ENCODE measurements at regions of chr20 and their contacts with region 1.

Region 1: DNA sequence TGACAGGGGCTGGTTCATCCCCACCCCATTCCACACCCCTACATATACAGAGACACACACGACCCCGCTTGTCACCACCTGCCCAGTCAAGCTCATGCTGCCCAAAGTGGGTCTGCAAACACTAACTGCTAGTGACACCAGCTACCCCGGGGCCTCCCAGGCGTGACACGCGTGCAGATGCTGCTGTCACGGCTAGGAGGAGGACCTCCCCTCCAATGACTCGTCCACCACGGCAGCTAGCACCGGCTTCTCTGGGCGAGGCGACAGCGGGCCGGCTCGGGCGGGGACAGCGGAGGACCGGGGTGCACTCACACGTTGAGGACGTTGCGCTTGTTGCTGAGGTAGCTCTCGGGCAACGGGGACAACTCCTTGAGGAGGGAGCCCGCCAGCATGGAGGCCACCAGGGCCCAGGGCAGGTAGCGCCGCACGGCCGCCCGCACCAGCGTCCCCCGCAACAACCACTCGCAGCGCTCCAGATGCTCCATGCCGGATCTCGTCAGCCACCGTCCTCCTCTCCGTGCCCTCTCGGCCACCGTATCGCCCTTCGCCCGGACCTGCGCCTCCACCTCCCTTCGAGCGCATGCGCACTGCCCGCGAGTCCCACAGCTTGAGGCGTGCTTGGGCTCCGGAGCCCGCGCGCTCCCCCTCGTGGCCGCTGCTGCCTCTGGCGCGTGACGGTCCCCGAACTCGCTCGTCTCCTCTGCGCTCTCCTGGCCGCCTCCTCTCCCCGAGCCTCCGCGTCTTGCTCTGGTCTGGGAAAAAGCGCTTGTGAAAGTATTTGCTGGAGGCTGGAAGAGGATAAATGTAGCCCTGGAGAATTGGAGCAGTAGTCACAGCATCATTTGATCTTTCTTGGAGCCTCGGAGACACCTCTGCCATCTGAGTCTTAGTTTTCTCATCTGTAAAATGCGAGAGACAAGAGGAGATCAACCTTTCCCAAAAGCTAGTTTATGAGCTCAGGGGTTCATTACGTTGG is at the start of gene FITM2:
- DNase-seq: peak; percentile 97 to 100 (median 98)
- ATAC-seq: peak; percentile 98
- H3K4me3 ChIP-seq: peak within 1 kb of the TSS; percentile 83 to 90
- H3K27ac ChIP-seq: peak within 1 kb of the TSS; percentile 26 to 70
- H3K4me1 ChIP-seq: peaks cover 7 to 20% of the 10 kb centered on the region in 2 donors
- H3K27me3 ChIP-seq: peaks cover 0 to 6% of the 10 kb centered on the region in 2 donors
- CTCF ChIP-seq: peak; percentile 86 to 93
- polyA plus RNA-seq, gene FITM2: 6.8 to 9.9 (median 8.0) TPM

Region 2: DNA sequence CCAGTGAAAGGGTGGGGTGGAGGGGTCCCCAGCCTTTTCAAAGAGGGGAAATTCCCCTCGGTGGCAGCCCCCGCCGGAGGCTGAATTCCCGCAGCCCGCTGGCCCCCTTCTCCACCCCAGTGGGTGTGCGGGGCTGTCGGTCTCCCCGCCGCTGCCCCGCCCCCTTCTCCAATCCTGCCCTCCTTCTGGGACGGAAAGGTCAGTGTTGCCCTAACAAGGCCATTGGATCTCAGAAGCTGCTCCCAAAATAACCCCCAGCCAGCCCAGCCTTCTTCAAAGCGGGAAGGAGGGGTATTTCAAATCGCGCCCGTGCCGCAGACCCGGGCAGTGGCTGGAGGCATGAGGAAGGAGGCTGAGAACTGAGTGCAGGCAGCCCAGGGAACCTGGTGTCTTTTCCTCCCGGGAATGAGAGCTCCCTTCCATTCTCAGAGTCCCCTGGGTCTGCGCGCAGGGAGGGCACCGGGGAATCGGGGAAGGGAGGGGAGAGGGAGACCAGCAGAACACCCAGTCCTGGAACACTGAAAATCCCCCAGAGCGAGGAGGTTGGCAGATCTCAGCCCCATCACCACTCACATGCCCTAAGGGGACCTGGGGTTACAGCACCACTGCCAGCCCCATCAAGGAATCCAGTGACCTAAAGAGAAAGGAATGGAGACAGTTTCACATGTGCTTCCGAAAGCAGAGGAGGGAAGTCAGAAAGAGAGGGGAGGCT is 123.7 kb before region 1 on chr20 and contains the start of gene JPH2:
- intact Hi-C with region 1: no loop called
- DNase-seq: no peak
- ATAC-seq: peak; percentile 50
- H3K4me3 ChIP-seq: peak within 1 kb of the TSS; percentile 15 to 21
- H3K27ac ChIP-seq: no peak within 1 kb of the TSS
- H3K4me1 ChIP-seq: peaks cover 9 to 15% of the 10 kb centered on the region in 2 donors
- H3K27me3 ChIP-seq: peaks cover 7 to 59% of the 10 kb centered on the region in 2 donors
- CTCF ChIP-seq: no peak
- polyA plus RNA-seq, gene JPH2: 0.83 to 1.9 (median 1.1) TPM

Region 3: GRCh38 chr20:44217342-44218092 is 93.4 kb before region 1 on chr20:
- intact Hi-C with region 1: loop called in 1 of 2 experiments (anchors 5 kb)
- DNase-seq: peak in 3 of 4 donors; percentile 70 to 80 (median 73)
- ATAC-seq: peak; percentile 93
- H3K4me3 ChIP-seq: no peak overlapping the region
- H3K27ac ChIP-seq: no peak overlapping the region
- H3K4me1 ChIP-seq: peaks cover 0 to 24% of the 10 kb centered on the region in 2 donors
- H3K27me3 ChIP-seq: no peaks in the 10 kb centered on the region
- CTCF ChIP-seq: peak; percentile 86 to 87

Region 4: GRCh38 chr20:44495802-44496481 is 185.0 kb after region 1 on chr20:
- intact Hi-C with region 1: no loop called
- DNase-seq: no peak
- ATAC-seq: peak; percentile 39
- H3K4me3 ChIP-seq: no peak overlapping the region
- H3K27ac ChIP-seq: peak overlapping the region; percentile 34 to 80
- H3K4me1 ChIP-seq: peaks cover 0 to 23% of the 10 kb centered on the region in 2 donors
- H3K27me3 ChIP-seq: no peaks in the 10 kb centered on the region
- CTCF ChIP-seq: no peak

Measured in left lung (tissue), 14 donors.